WTC11 (cell line): ENCODE measurements at regions of chr10 and their contacts with region 1.

Region 1: DNA sequence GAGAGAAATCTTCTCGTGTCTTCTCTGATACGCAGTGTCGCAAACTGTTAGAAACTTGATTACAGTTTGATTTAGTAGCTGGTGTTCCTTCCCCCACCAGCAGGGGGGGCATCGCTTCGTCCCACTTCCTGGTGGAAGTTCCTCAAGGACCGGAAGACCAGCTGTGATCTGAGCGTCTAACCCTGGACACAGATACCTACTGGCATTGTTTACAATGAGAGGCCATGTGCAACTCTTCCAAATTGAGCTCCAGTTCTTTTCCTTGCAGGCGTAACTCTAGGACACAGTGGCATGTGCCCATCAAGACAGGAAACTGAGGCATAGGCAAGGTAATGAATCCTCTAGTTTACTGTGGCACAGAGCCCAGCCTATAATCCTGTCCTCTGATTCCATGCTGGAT is 219.0 kb downstream of the CCDC3 start:
- DNase-seq: peak; percentile 75
- ATAC-seq: peak; percentile 67
- H3K4me3 Mint-ChIP-seq: no peak overlapping the region
- H3K27ac Mint-ChIP-seq: no peak overlapping the region
- H3K4me1 Mint-ChIP-seq: peaks cover 4% of the 10 kb centered on the region; the same call in 1 of the 2 replicates
- H3K27me3 Mint-ChIP-seq: no peaks in the 10 kb centered on the region
- CTCF ChIP-seq: peak; percentile 88

Region 2: GRCh38 chr10:12705943-12706342 is 76.6 kb before region 1 on chr10:
- CTCF ChIA-PET with region 1: no interaction called
- POLR2A ChIA-PET with region 1: no interaction called
- DNase-seq: no peak
- ATAC-seq: no peak
- H3K4me3 Mint-ChIP-seq: no peak overlapping the region
- H3K27ac Mint-ChIP-seq: no peak overlapping the region
- H3K4me1 Mint-ChIP-seq: peaks cover 30% of the 10 kb centered on the region
- H3K27me3 Mint-ChIP-seq: peaks cover 5% of the 10 kb centered on the region
- CTCF ChIP-seq: no peak

Region 3: GRCh38 chr10:12768156-12769100 is 14.1 kb before region 1 on chr10:
- CTCF ChIA-PET with region 1: interaction called, 10 read pairs
- POLR2A ChIA-PET with region 1: no interaction called
- DNase-seq: peak; percentile 50
- ATAC-seq: peak; percentile 69
- H3K4me3 Mint-ChIP-seq: peak overlapping the region; percentile 39
- H3K27ac Mint-ChIP-seq: peak overlapping the region; percentile 22
- H3K4me1 Mint-ChIP-seq: peaks cover 63% of the 10 kb centered on the region
- H3K27me3 Mint-ChIP-seq: peaks cover 2% of the 10 kb centered on the region; the same call in 1 of the 2 replicates
- CTCF ChIP-seq: no peak

Region 4: GRCh38 chr10:12800302-12800701 is 17.8 kb after region 1 on chr10:
- CTCF ChIA-PET with region 1: interaction called, 16 read pairs
- POLR2A ChIA-PET with region 1: interaction called, 5 read pairs
- DNase-seq: no peak
- ATAC-seq: no peak
- H3K4me3 Mint-ChIP-seq: no peak overlapping the region
- H3K27ac Mint-ChIP-seq: no peak overlapping the region
- H3K4me1 Mint-ChIP-seq: peaks cover 25% of the 10 kb centered on the region
- H3K27me3 Mint-ChIP-seq: no peaks in the 10 kb centered on the region
- CTCF ChIP-seq: no peak

Region 5: GRCh38 chr10:12902135-12902572 is 119.6 kb after region 1 on chr10:
- CTCF ChIA-PET with region 1: interaction called, 28 read pairs
- POLR2A ChIA-PET with region 1: no interaction called
- DNase-seq: peak; percentile 68
- ATAC-seq: peak; percentile 71
- H3K4me3 Mint-ChIP-seq: no peak overlapping the region
- H3K27ac Mint-ChIP-seq: 0 out of 2 replicates have a peak overlapping the region, but pooled peaks have one; percentile 3
- H3K4me1 Mint-ChIP-seq: peaks cover 11% of the 10 kb centered on the region
- H3K27me3 Mint-ChIP-seq: no peaks in the 10 kb centered on the region; the same call in 1 of the 2 replicates
- CTCF ChIP-seq: peak; percentile 64

Region 6: DNA sequence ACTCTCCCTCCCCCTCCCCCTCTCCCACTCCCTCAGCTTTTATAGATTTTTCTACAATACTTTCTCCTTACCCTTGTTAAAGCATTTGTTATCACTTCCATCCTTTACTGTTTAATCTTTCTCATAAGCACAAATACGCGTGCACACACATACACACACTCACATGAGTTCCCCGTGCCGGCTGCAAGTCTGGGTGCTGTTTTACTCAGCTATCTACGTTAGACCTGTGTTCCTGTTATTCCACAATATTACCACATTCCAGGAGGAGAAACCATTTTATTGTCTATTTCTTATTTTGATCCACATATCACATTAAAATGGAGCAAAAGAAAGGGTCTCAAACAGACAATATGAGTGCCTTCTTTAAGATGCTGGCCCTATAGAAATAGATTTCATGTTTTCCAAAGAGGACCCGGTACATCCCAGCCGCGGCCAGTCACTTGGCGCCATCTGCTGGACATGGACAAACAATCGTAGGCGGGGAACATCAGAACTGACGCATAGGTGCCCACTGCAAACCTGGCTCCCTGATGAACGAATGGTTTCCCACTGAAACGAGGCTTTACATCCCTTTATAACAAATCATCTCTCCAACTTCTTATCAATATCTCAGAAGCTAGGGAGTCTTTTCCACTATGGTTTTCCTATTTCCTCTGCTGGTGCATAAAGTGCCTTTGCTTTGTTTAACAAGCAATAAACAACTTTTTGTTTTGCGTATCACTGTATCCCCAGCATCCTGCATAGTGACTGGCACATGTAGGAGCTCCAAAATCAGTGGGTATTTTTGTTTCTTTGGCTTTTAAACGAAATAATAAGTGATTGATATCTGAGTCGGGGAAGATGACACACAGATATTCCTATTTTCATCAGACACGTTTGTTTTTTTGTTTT is 292.3 kb after region 1 on chr10:
- CTCF ChIA-PET with region 1: interaction called, 11 read pairs
- POLR2A ChIA-PET with region 1: no interaction called
- DNase-seq: peak; percentile 79
- ATAC-seq: peak; percentile 93
- H3K4me3 Mint-ChIP-seq: no peak overlapping the region
- H3K27ac Mint-ChIP-seq: no peak overlapping the region
- H3K4me1 Mint-ChIP-seq: peaks cover 10% of the 10 kb centered on the region
- H3K27me3 Mint-ChIP-seq: no peaks in the 10 kb centered on the region
- CTCF ChIP-seq: peak; percentile 79